ENCODE measurements at regions of chr1 and their contacts with region 1.

Region 1: GRCh38 chr1:55974714-55975511 is 604.5 kb downstream of the PLPP3 start:
- DNase-seq: peak; percentile 50
- ATAC-seq: peak; percentile 40
- H3K4me3 ChIP-seq: no peak overlapping the region
- H3K27ac ChIP-seq: no peak overlapping the region
- H3K4me1 ChIP-seq: peaks cover 11% of the 10 kb centered on the region; the same call in 1 of the 2 replicates
- H3K27me3 ChIP-seq: no peaks in the 10 kb centered on the region
- CTCF ChIP-seq: no peak

Region 2: GRCh38 chr1:56569661-56570060 is 594.7 kb after region 1 on chr1:
- CTCF ChIA-PET with region 1: no interaction called
- POLR2A ChIA-PET with region 1: interaction called, 23 read pairs
- intact Hi-C with region 1: no loop called
- DNase-seq: peak; percentile 97
- ATAC-seq: peak; percentile 95
- H3K4me3 ChIP-seq: peak overlapping the region; percentile 12; the same call in 1 of the 2 replicates
- H3K27ac ChIP-seq: peak overlapping the region; percentile 88
- H3K4me1 ChIP-seq: peaks cover 44% of the 10 kb centered on the region
- H3K27me3 ChIP-seq: no peaks in the 10 kb centered on the region
- CTCF ChIP-seq: no peak

Measured in PC-3 (cell line).